Motor neuron (in vitro differentiated cells): ENCODE measurements at regions of chr10 and their contacts with region 1.

Region 1: GRCh38 chr10:95254629-95255028 is 36.2 kb downstream of the PDLIM1 start:
- ATAC-seq: no peak
- H3K4me3 ChIP-seq: no peak overlapping the region
- H3K27ac ChIP-seq: no peak overlapping the region
- H3K4me1 ChIP-seq: no peaks in the 10 kb centered on the region

Region 2: GRCh38 chr10:95363303-95363912 is 108.8 kb after region 1 on chr10:
- in situ Hi-C with region 1: loop called in 5 of 9 experiments (anchors 5 to 25 kb)
- ATAC-seq: peak; percentile 53 to 81 (median 66)
- H3K4me3 ChIP-seq: no peak overlapping the region
- H3K27ac ChIP-seq: no peak overlapping the region
- H3K4me1 ChIP-seq: no peaks in the 10 kb centered on the region

Region 3: DNA sequence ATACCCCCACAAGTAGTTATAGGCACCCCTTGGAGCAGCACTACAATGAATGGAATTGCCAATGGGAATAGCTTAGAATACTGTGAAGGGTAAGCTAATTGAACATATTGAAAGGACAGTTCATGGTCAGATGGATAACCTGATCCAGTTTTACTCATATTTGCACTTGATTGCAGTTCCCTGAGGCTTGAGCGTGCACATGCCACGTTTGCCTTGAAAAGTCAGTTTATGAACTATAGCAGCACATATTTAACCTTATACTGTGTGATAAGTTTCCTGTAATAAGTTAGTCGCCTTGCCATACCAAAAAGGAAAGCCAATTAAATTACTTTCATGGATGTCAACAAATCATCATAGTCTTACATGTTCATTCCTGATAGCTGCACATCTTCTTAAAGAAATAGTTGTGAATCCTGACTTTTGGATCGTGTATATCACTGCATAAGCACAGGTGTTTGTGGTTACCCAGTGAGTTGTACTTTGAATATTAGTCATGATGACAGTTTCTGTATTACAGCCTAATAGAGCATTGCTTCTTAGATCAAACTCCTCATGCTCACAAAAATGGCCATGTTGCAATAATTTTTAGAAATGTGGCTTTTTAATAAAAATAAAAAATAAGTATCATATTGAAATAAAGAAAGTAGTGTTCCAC is 1071.2 kb after region 1 on chr10:
- in situ Hi-C with region 1: no loop called
- ATAC-seq: no peak
- H3K4me3 ChIP-seq: no peak overlapping the region
- H3K27ac ChIP-seq: no peak overlapping the region
- H3K4me1 ChIP-seq: no peaks in the 10 kb centered on the region